WTC11 (cell line): ENCODE measurements at regions of chrX and their contacts with region 1.

Region 1: GRCh38 chrX:154762523-154763289 is at the start of gene DKC1:
- DNase-seq: peak; percentile 94
- ATAC-seq: peak; percentile 94
- H3K4me3 Mint-ChIP-seq: peak within 1 kb of the TSS; percentile 80
- H3K27ac Mint-ChIP-seq: peak within 1 kb of the TSS; percentile 97
- H3K4me1 Mint-ChIP-seq: peaks cover 10% of the 10 kb centered on the region
- H3K27me3 Mint-ChIP-seq: no peaks in the 10 kb centered on the region
- CTCF ChIP-seq: no peak
- total RNA-seq, gene DKC1: 108 to 123 TPM (median 112 TPM) in 3 replicates

Region 2: DNA sequence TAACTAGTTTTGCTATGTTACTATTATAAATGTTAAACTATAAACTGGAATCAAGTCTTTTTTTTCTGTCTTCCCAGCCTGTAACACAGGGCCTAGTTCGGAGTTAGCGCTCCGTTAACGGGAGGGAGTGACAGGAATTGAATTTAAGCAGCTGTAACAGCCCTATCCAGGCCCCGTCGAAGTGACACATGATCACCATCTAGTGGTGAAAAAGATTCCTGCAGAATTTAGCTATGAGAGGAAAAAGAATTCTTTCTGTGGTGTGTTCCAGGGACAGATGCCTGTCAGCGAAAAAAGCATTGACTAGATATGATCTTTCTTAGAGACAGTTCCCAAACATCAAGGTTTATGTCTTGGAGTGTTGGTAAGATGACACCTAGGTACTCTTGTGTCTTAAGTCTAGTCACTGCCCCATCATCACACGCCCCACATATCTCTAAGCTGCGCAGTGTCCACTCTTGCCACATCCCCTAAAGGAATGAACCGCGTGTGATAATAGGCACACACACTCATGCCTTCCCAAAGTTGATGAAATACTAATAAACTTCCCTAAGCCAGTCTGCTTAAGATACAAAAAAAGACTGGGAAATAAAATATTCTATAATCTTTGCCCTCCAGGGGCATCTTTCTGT is 13.9 kb before region 1 on chrX:
- CTCF ChIA-PET with region 1: interaction called, 12 read pairs
- POLR2A ChIA-PET with region 1: no interaction called
- DNase-seq: peak; percentile 15
- ATAC-seq: peak; percentile 50
- H3K4me3 Mint-ChIP-seq: no peak overlapping the region
- H3K27ac Mint-ChIP-seq: no peak overlapping the region
- H3K4me1 Mint-ChIP-seq: peaks cover 9% of the 10 kb centered on the region
- H3K27me3 Mint-ChIP-seq: peaks cover 46% of the 10 kb centered on the region
- CTCF ChIP-seq: peak; percentile 39; the same call in 1 of the 2 replicates